AG04449 (cell line): ENCODE measurements at regions of chr10 and their contacts with region 1.

Region 1: GRCh38 chr10:99630439-99630838 is 10.2 kb upstream of the SLC25A28 start:
- DNase-seq: no peak
- H3K4me3 ChIP-seq: no peak overlapping the region
- CTCF ChIP-seq: peak; percentile 58

Region 2: DNA sequence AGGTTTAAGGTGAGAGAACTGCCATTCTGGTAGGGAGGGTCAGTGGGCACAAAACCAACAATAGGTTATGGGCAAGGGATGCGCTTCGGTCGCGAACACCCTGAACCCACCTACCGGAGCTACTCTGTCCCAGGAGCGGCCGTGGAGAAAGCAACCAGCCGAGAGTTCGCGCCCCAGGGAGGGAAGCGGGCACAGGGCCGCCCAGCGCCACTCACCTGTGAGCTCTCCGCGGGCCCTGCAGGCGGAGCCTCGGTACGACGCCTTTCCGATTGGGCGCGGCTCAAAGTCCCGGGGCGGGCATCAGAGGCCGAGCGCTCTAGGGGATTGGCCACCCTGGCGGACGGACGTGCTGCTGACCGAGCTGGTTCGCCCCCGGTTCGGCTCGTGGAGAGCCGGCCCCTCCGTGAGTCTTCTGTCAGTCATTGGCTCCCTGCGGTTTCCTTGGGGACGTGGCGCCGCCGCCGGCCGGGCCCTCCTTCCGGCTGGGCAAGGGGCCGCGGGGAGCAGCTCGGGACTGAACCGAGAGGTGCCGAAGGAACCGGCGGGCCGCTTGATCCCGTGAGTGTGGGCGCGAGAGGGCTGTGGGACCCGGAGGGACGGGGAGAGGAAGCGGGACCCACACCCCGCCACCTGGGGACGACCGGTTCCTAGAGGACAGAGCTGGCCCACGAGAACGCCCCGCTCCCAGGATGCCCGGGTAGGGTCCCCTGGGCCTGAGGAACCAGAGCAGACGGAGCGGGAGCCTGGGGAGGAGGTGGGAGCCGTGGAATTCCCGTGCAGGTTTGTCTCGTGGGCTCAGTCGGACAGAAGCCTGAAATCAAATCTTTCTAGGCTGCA is 28.8 kb after region 1 on chr10 and contains the start of gene ENTPD7:
- CTCF ChIA-PET with region 1: interaction called, 17 read pairs
- POLR2A ChIA-PET with region 1: no interaction called
- DNase-seq: peak; percentile 74
- H3K4me3 ChIP-seq: peak within 1 kb of the TSS; percentile 91
- CTCF ChIP-seq: peak; percentile 38

Region 3: GRCh38 chr10:99698504-99699080 is 68.2 kb after region 1 on chr10:
- CTCF ChIA-PET with region 1: interaction called, 10 read pairs
- POLR2A ChIA-PET with region 1: no interaction called
- DNase-seq: no peak
- H3K4me3 ChIP-seq: no peak overlapping the region
- CTCF ChIP-seq: no peak